T-cell (primary cell): ENCODE measurements at regions of chr17 and their contacts with region 1.

Region 1: GRCh38 chr17:6435968-6436367 is 1.0 kb upstream of the AIPL1 start:
- DNase-seq: peak; percentile 12 to 78 (median 52)
- ATAC-seq: peak; percentile 89 to 98 (median 92)
- H3K4me3 ChIP-seq: no peak overlapping the region
- H3K4me3 Mint-ChIP-seq: no peak overlapping the region
- H3K27ac ChIP-seq: no peak overlapping the region
- H3K27ac Mint-ChIP-seq: no peak overlapping the region
- H3K4me1 ChIP-seq: no peaks in the 10 kb centered on the region
- H3K4me1 Mint-ChIP-seq: peaks cover 0 to 4% (median 2%) of the 10 kb centered on the region in 3 donors
- H3K27me3 ChIP-seq: peaks cover 2 to 21% of the 10 kb centered on the region in 2 experiments
- H3K27me3 Mint-ChIP-seq: peaks cover 28 to 29% of the 10 kb centered on the region in 2 donors

Region 2: GRCh38 chr17:5587438-5588032 is 848.4 kb before region 1 on chr17:
- CTCF ChIA-PET with region 1: interaction called, 7 to 13 read pairs
- POLR2A ChIA-PET with region 1: no interaction called
- DNase-seq: peak in 29 of 35 experiments; percentile 21 to 90 (median 45)
- ATAC-seq: no peak
- H3K4me3 ChIP-seq: no peak overlapping the region
- H3K4me3 Mint-ChIP-seq: peak overlapping the region; percentile 1 to 70 (median 44)
- H3K27ac ChIP-seq: no peak overlapping the region
- H3K27ac Mint-ChIP-seq: peak overlapping the region; percentile 95 to 98
- H3K4me1 ChIP-seq: peaks cover 20 to 51% of the 10 kb centered on the region in 2 experiments
- H3K4me1 Mint-ChIP-seq: peaks cover 38 to 44% (median 44%) of the 10 kb centered on the region in 3 donors
- H3K27me3 ChIP-seq: peaks cover 0 to 6% of the 10 kb centered on the region in 2 experiments
- H3K27me3 Mint-ChIP-seq: no peaks in the 10 kb centered on the region

Region 3: GRCh38 chr17:6305613-6306360 is 130.2 kb before region 1 on chr17:
- CTCF ChIA-PET with region 1: no interaction called
- POLR2A ChIA-PET with region 1: no interaction called
- DNase-seq: no peak
- ATAC-seq: no peak
- H3K4me3 ChIP-seq: no peak overlapping the region
- H3K4me3 Mint-ChIP-seq: no peak overlapping the region
- H3K27ac ChIP-seq: no peak overlapping the region
- H3K27ac Mint-ChIP-seq: no peak overlapping the region
- H3K4me1 ChIP-seq: no peaks in the 10 kb centered on the region
- H3K4me1 Mint-ChIP-seq: no peaks in the 10 kb centered on the region
- H3K27me3 ChIP-seq: peaks cover 0 to 22% of the 10 kb centered on the region in 2 experiments
- H3K27me3 Mint-ChIP-seq: peaks cover 40 to 50% of the 10 kb centered on the region in 2 donors

Region 4: GRCh38 chr17:6695565-6695964 is 259.6 kb after region 1 on chr17:
- CTCF ChIA-PET with region 1: no interaction called
- POLR2A ChIA-PET with region 1: no interaction called
- DNase-seq: no peak
- ATAC-seq: no peak
- H3K4me3 ChIP-seq: no peak overlapping the region
- H3K4me3 Mint-ChIP-seq: no peak overlapping the region
- H3K27ac ChIP-seq: no peak overlapping the region
- H3K27ac Mint-ChIP-seq: no peak overlapping the region
- H3K4me1 ChIP-seq: no peaks in the 10 kb centered on the region
- H3K4me1 Mint-ChIP-seq: no peaks in the 10 kb centered on the region
- H3K27me3 ChIP-seq: peaks cover 0 to 31% of the 10 kb centered on the region in 2 experiments
- H3K27me3 Mint-ChIP-seq: peaks cover 24 to 43% of the 10 kb centered on the region in 2 donors

Region 5: DNA sequence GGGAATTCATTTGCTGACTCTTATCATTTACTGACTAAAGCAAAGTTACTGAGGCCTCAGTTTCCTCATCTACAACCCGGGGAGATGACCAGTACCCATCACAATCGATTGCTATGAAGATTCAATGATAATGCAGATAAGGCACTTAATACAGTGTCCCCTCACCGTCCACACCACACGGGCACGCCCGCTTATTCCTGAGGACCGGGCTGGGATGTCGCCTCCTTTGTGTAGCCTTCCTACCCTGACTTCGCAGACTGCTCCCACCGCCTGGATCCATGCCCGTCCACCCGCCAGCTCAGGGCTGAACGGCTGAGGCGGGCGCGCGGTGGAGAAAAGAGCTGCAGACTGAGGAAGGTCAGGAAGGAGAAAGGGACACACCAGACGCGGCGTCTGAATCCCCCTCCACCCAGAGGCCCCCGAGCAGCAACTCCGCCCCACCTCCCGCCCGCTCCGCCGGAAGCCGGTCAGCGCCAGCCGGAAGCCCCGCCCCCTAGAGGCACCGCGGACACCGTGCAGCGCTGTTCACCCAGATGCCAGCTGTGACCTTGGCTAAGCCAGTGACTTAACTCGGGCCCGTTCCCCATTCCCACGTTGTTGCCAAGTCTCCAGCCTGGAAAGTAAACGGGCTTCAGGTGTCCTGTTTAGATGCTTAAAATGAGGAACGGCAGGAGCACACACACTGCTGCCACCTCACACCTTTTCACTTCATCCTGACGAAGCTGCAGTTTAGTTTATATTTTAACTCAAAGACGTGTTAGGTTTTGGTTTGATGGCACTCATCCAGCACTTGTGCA is 1940.5 kb after region 1 on chr17 and contains the start of gene KRABD2:
- CTCF ChIA-PET with region 1: interaction called in 1 of 2 experiments, 12 read pairs
- POLR2A ChIA-PET with region 1: no interaction called
- DNase-seq: peak; percentile 74 to 92 (median 87)
- ATAC-seq: peak; percentile 98 to 100 (median 100)
- H3K4me3 ChIP-seq: peak within 1 kb of the TSS; percentile 74 to 94
- H3K4me3 Mint-ChIP-seq: peak within 1 kb of the TSS; percentile 83 to 89 (median 88)
- H3K27ac ChIP-seq: peak within 1 kb of the TSS; percentile 65
- H3K27ac Mint-ChIP-seq: peak within 1 kb of the TSS; percentile 85 to 86
- H3K4me1 ChIP-seq: peaks cover 29 to 30% of the 10 kb centered on the region in 2 experiments
- H3K4me1 Mint-ChIP-seq: peaks cover 50 to 59% (median 57%) of the 10 kb centered on the region in 3 donors
- H3K27me3 ChIP-seq: no peaks in the 10 kb centered on the region
- H3K27me3 Mint-ChIP-seq: no peaks in the 10 kb centered on the region